ENCODE measurements at regions of chr7 and their contacts with region 1.

Region 1: GRCh38 chr7:75914730-75915585 is at the start of gene POR:
- DNase-seq: peak; percentile 86 to 94
- ATAC-seq: peak; percentile 91 to 95
- H3K4me3 ChIP-seq: peak within 1 kb of the TSS; percentile 81
- H3K27ac ChIP-seq: peak within 1 kb of the TSS; percentile 92 to 94
- H3K4me1 ChIP-seq: peaks cover 21% of the 10 kb centered on the region
- CTCF ChIP-seq: no peak
- EP300 ChIP-seq: no peak; a peak in 1 of 5 replicates
- POLR2A ChIP-seq: peak; percentile 96
- RAD21 ChIP-seq: peak in 1 of 2 experiments; percentile 44; a peak in 3 of 5 replicates
- polyA plus RNA-seq, gene POR: 69.6 and 71.1 TPM in 2 replicates

Region 2: DNA sequence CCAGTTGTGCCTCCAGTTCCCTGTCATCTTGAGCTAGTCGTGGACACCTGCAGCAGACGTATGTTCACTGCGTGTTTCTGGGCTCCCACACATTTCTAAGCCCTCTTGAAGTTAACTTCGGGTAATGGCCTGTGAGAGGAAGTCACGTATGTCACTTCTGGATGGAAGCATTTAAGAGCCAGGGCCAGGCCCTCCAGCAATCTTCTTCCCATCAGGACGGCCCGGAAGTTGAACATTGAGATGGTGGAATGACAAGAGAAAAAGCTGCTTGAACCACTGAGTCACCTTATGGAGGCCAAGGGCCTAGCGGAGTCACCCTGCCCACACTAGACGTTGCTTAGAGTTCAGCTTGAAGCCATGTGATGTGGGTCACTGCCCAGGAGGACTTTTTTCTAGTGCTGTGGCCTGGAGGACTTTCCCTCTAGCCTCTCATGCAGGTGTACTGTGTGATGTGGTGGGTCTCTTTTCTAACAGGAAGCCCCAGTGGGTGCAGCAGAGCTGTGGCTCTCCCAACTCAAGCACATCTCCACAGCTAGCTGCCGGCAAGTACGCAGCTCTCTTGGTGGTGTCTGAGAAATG is 13.5 kb after region 1 on chr7:
- CTCF ChIA-PET with region 1: interaction called, 4 read pairs
- POLR2A ChIA-PET with region 1: interaction called, 33 read pairs
- DNase-seq: no peak
- ATAC-seq: peak in 1 of 2 experiments; percentile 27; a peak in 3 of 6 replicates
- H3K4me3 ChIP-seq: no peak overlapping the region
- H3K27ac ChIP-seq: no peak overlapping the region
- H3K4me1 ChIP-seq: peaks cover 17% of the 10 kb centered on the region
- CTCF ChIP-seq: no peak
- EP300 ChIP-seq: no peak
- POLR2A ChIP-seq: no peak
- RAD21 ChIP-seq: no peak

Region 3: DNA sequence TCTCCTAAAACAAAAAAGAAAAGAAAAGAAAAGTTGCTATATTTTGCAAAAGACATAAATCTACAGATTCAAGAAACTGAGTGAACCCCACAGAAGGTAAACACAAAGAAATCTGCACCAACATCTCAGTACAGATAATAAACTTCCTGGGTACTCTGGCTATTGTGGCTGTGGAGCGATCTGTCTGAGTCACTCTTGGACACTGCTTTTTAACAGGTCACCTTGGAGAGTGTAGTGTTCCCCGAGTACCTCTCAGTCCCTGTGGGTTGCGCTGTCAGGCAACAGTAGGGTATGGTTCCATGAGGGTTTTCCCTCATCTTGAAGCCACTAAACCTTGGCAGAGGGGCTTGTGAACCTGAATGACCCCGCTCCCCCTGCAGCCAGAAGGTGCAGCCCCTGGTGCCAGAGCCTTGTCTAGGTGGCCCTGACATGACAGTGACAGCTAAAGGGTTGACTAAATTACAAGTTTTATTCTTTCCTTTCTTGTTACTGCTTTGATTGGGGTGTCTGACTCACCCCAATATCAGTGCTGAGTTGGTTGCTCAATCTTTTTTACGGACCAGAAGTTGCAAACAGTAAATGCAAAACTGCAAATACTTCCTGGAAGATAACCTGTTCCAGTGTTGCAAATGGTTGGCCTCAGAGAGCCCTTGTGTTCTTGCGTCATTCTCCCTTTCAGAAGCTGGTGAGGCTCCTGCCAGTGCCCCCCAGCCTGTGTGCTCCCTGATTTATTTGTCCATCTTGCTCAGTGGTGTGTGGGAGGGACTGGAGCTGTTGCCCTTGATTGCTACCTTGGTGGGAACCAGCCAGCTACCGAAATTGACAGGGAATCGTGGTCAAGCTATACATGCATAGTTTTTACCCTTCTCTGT is 30.6 kb after region 1 on chr7:
- CTCF ChIA-PET with region 1: interaction called, 5 read pairs
- POLR2A ChIA-PET with region 1: interaction called, 10 read pairs
- DNase-seq: peak in 1 of 2 experiments; percentile 51
- ATAC-seq: peak; percentile 79 to 80
- H3K4me3 ChIP-seq: no peak overlapping the region
- H3K27ac ChIP-seq: peak overlapping the region; percentile 60 to 81
- H3K4me1 ChIP-seq: peaks cover 43% of the 10 kb centered on the region
- CTCF ChIP-seq: no peak
- EP300 ChIP-seq: peak in 1 of 2 experiments; percentile 36; a peak in 1 of 5 replicates
- POLR2A ChIP-seq: no peak
- RAD21 ChIP-seq: no peak

Region 4: GRCh38 chr7:75994388-75995051 is 79.6 kb after region 1 on chr7 and contains the start of gene TMEM120A:
- CTCF ChIA-PET with region 1: no interaction called
- POLR2A ChIA-PET with region 1: interaction called, 13 read pairs
- DNase-seq: peak; percentile 87 to 98
- ATAC-seq: peak; percentile 84 to 93
- H3K4me3 ChIP-seq: peak within 1 kb of the TSS; percentile 75
- H3K27ac ChIP-seq: peak within 1 kb of the TSS; percentile 75 to 91
- H3K4me1 ChIP-seq: peaks cover 32% of the 10 kb centered on the region
- CTCF ChIP-seq: no peak
- EP300 ChIP-seq: no peak
- POLR2A ChIP-seq: peak; percentile 76
- RAD21 ChIP-seq: no peak
- polyA plus RNA-seq, gene TMEM120A: 53.8 and 77.6 TPM in 2 replicates

Region 5: GRCh38 chr7:76166404-76167255 is 251.7 kb after region 1 on chr7:
- CTCF ChIA-PET with region 1: no interaction called
- POLR2A ChIA-PET with region 1: no interaction called
- DNase-seq: peak; percentile 94 to 98
- ATAC-seq: peak; percentile 95 to 97
- H3K4me3 ChIP-seq: peak overlapping the region; percentile 62
- H3K27ac ChIP-seq: peak overlapping the region; percentile 73 to 90
- H3K4me1 ChIP-seq: 0 out of 3 replicates have a peak, but pooled peaks cover 4% of the 10 kb centered on the region
- CTCF ChIP-seq: no peak
- EP300 ChIP-seq: no peak
- POLR2A ChIP-seq: peak; percentile 92
- RAD21 ChIP-seq: 0 out of 5 replicates have a peak, but pooled peaks have one; percentile 10 to 22

Measured in A549 (cell line).